ENCODE measurements at regions of chr1 and their contacts with region 1.

Region 1: DNA sequence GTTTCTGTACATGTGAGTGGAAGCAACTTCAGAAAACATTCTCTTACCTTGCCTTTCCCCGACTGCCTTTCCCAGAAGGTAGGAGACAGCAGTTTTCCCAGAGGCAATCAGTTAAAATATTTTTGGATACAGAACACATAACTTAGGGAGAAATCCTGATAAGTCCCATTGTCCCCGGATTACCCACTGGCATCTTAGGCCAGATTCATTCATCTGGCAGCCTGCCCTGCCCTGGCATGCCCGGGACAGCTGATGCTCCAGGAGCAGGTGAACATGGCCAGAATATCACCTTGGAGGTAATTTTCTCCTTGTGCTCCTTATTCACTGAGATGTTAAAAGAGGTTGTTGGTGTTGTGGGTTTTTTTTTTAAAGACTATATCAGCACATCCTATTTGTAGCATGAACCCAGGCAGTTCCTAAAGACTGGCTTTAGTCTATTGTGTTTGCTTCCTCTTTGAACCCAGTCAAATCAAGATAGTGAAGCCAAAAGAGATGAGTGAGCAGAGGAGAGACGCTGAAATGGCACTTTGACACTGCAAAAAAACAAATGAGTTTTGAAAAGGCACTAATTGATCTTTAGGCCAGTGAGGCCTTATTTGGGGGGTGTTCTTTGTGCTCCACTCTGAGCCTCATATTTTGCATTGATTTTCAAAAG is 139.6 kb downstream of the PLPP3 start:
- DNase-seq: no peak
- H3K4me3 ChIP-seq: no peak overlapping the region
- H3K27ac ChIP-seq: no peak overlapping the region
- H3K4me1 ChIP-seq: no peaks in the 10 kb centered on the region
- H3K27me3 ChIP-seq: no peaks in the 10 kb centered on the region
- CTCF ChIP-seq: no peak
- EP300 ChIP-seq: no peak
- POLR2A ChIP-seq: no peak

Region 2: DNA sequence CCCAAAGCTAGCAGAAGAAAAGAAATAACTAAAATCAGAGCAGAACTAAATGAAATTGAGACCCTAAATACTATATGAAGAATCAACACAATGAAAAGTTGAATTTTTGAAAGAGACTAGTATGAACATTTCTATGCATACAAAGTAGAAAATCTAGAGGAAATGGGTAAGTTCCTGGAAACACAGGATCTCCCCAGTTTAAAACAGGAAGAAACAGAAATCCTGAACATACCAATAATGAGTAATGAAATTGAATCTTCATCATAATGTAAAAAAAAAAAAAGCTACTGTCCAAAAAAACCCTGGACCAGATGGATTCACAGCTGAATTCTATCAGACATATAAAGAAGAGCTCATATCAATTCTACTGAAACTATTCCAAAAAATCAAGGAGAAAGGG is 93.9 kb before region 1 on chr1:
- intact Hi-C with region 1: no loop called
- DNase-seq: no peak
- H3K4me3 ChIP-seq: no peak overlapping the region
- H3K27ac ChIP-seq: no peak overlapping the region
- H3K4me1 ChIP-seq: no peaks in the 10 kb centered on the region
- H3K27me3 ChIP-seq: no peaks in the 10 kb centered on the region
- CTCF ChIP-seq: no peak
- EP300 ChIP-seq: no peak
- POLR2A ChIP-seq: no peak

Region 3: GRCh38 chr1:56464294-56464693 is 24.6 kb after region 1 on chr1:
- intact Hi-C with region 1: loop called (anchors 1 kb)
- DNase-seq: no peak
- H3K4me3 ChIP-seq: no peak overlapping the region
- H3K27ac ChIP-seq: no peak overlapping the region
- H3K4me1 ChIP-seq: no peaks in the 10 kb centered on the region
- H3K27me3 ChIP-seq: no peaks in the 10 kb centered on the region
- CTCF ChIP-seq: no peak
- EP300 ChIP-seq: no peak
- POLR2A ChIP-seq: no peak

Measured in sigmoid colon (tissue), 7 donors.